K562 (cell line): ENCODE measurements at regions of chr6 and their contacts with region 1.

Region 1: DNA sequence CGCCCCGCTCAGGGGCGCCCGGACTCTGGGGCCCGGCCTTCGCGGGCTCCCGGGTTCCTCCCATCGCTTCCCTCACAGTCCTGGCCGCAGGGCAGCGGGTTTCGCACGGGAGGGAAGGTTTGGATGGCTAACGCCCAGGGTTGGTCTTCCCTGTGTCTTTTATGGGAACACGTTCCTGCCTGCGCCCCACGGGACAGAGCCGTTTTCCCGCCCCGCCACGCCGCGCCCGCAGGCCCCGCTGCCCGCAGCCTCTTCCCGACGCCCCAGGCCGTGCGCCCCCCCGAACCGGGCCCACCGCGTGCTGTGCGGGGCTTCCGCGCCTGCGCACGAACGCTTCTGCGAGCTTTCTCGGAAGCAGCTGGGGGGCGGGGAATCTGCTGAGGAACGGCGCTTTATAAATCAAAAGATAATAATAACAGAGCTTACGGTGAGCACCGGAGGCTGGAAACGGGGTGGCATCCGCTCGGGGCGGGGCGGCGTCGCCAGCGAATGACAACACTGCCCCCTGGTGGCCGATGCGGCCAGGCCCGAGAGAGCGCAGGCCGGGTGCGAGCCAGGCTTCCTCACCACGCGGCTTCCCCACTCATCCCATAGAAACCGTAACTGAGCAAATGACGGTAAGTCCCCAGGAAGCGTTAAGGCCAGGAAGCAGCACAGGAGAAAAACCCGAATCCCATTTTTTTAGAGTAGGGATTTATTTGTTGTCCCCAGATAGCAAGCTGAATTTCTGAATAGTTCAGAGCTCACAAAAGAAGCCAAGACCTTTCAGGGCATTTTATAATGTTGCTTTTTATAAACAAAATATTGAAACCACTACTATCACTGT is 116.4 kb downstream of the MYLK4 start:
- DNase-seq: peak; percentile 85 to 94 (median 90)
- ATAC-seq: peak; percentile 99
- H3K4me3 ChIP-seq: no peak overlapping the region
- H3K27ac ChIP-seq: no peak overlapping the region
- H3K4me1 ChIP-seq: peaks cover 0 to 8% of the 10 kb centered on the region in 2 experiments; a peak in 2 of 5 replicates
- H3K27me3 ChIP-seq: peaks cover 46 to 78% of the 10 kb centered on the region in 2 experiments; a peak in 4 of 5 replicates
- CTCF ChIP-seq: peak; percentile 96 to 97 (median 96)
- EP300 ChIP-seq: no peak
- POLR2A ChIP-seq: no peak
- RAD21 ChIP-seq: peak; percentile 97

Region 2: GRCh38 chr6:2209226-2209809 is 425.0 kb before region 1 on chr6:
- CTCF ChIA-PET with region 1: no interaction called
- POLR2A ChIA-PET with region 1: no interaction called
- in situ Hi-C with region 1: no loop called
- intact Hi-C with region 1: loop called (anchors 10 kb)
- DNase-seq: peak in 3 of 4 experiments; percentile 39 to 62 (median 49)
- ATAC-seq: peak; percentile 96
- H3K4me3 ChIP-seq: no peak overlapping the region
- H3K27ac ChIP-seq: no peak overlapping the region
- H3K4me1 ChIP-seq: no peaks in the 10 kb centered on the region
- H3K27me3 ChIP-seq: no peaks in the 10 kb centered on the region; a peak in 2 of 5 replicates
- CTCF ChIP-seq: peak; percentile 69 to 75 (median 75)
- EP300 ChIP-seq: no peak
- POLR2A ChIP-seq: no peak
- RAD21 ChIP-seq: peak; percentile 35 to 74; a peak in 3 of 4 replicates

Region 3: GRCh38 chr6:2264932-2265331 is 369.4 kb before region 1 on chr6:
- CTCF ChIA-PET with region 1: no interaction called
- POLR2A ChIA-PET with region 1: no interaction called
- in situ Hi-C with region 1: no loop called
- intact Hi-C with region 1: no loop called
- DNase-seq: no peak
- ATAC-seq: no peak
- H3K4me3 ChIP-seq: no peak overlapping the region
- H3K27ac ChIP-seq: no peak overlapping the region
- H3K4me1 ChIP-seq: no peaks in the 10 kb centered on the region
- H3K27me3 ChIP-seq: no peaks in the 10 kb centered on the region
- CTCF ChIP-seq: no peak
- EP300 ChIP-seq: no peak
- POLR2A ChIP-seq: no peak
- RAD21 ChIP-seq: no peak

Region 4: GRCh38 chr6:2448820-2449571 is 185.4 kb before region 1 on chr6:
- CTCF ChIA-PET with region 1: no interaction called
- POLR2A ChIA-PET with region 1: interaction called, 3 read pairs
- in situ Hi-C with region 1: no loop called
- intact Hi-C with region 1: loop called (anchors 1 kb)
- DNase-seq: peak; percentile 49 to 72 (median 60)
- ATAC-seq: peak; percentile 94
- H3K4me3 ChIP-seq: no peak overlapping the region
- H3K27ac ChIP-seq: no peak overlapping the region
- H3K4me1 ChIP-seq: no peaks in the 10 kb centered on the region
- H3K27me3 ChIP-seq: peaks cover 2 to 16% of the 10 kb centered on the region in 2 experiments; a peak in 3 of 5 replicates
- CTCF ChIP-seq: peak; percentile 61 to 81 (median 80)
- EP300 ChIP-seq: no peak
- POLR2A ChIP-seq: no peak
- RAD21 ChIP-seq: peak; percentile 60 to 69

Region 5: GRCh38 chr6:2505624-2506023 is 128.7 kb before region 1 on chr6:
- CTCF ChIA-PET with region 1: no interaction called
- POLR2A ChIA-PET with region 1: no interaction called
- in situ Hi-C with region 1: no loop called
- intact Hi-C with region 1: loop called (anchors 5 kb)
- DNase-seq: peak; percentile 29 to 39 (median 34)
- ATAC-seq: peak; percentile 70
- H3K4me3 ChIP-seq: no peak overlapping the region
- H3K27ac ChIP-seq: no peak overlapping the region
- H3K4me1 ChIP-seq: no peaks in the 10 kb centered on the region
- H3K27me3 ChIP-seq: peaks cover 18 to 27% of the 10 kb centered on the region in 2 experiments
- CTCF ChIP-seq: peak; percentile 55 to 73 (median 64)
- EP300 ChIP-seq: no peak
- POLR2A ChIP-seq: no peak
- RAD21 ChIP-seq: peak in 1 of 2 experiments; percentile 13; a peak in 1 of 4 replicates

Region 6: DNA sequence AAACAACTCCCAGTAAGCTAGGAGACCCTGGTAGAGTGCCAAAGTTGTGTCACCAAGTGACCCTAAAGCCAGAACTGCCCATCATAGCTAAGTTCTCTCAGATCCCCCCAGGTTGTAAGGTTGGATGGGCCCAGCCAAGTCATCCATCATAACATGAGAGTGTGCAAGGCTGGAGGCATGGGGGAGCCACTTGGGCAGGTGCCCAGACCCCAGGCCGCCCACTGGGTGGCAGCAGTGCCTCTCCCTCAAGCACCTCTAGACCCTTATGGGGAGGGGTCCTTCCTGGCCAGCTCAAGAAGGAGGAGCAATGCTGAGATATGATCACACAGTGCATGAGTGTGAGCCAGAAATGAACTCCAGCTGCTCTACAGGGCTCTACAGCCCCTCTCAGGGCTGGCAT is 38.1 kb before region 1 on chr6:
- CTCF ChIA-PET with region 1: no interaction called
- POLR2A ChIA-PET with region 1: no interaction called
- in situ Hi-C with region 1: no loop called
- intact Hi-C with region 1: no loop called
- DNase-seq: peak in 1 of 4 experiments; percentile 31
- ATAC-seq: peak; percentile 66
- H3K4me3 ChIP-seq: no peak overlapping the region
- H3K27ac ChIP-seq: no peak overlapping the region
- H3K4me1 ChIP-seq: no peaks in the 10 kb centered on the region
- H3K27me3 ChIP-seq: peaks cover 0 to 25% of the 10 kb centered on the region in 2 experiments; a peak in 3 of 5 replicates
- CTCF ChIP-seq: peak; percentile 29 to 38 (median 34); a peak in 2 of 6 replicates
- EP300 ChIP-seq: no peak
- POLR2A ChIP-seq: no peak
- RAD21 ChIP-seq: peak in 1 of 2 experiments; percentile 47; a peak in 2 of 4 replicates

Region 7: GRCh38 chr6:2695454-2696095 is 61.2 kb after region 1 on chr6:
- CTCF ChIA-PET with region 1: no interaction called
- POLR2A ChIA-PET with region 1: no interaction called
- in situ Hi-C with region 1: no loop called
- intact Hi-C with region 1: loop called (anchors 5 kb)
- DNase-seq: peak in 1 of 4 experiments; percentile 30
- ATAC-seq: peak; percentile 72; the same call in 2 of the 3 replicates
- H3K4me3 ChIP-seq: no peak overlapping the region
- H3K27ac ChIP-seq: no peak overlapping the region
- H3K4me1 ChIP-seq: no peaks in the 10 kb centered on the region
- H3K27me3 ChIP-seq: peaks cover 51 to 59% of the 10 kb centered on the region in 2 experiments
- CTCF ChIP-seq: peak; percentile 17 to 62 (median 48); a peak in 4 of 6 replicates
- EP300 ChIP-seq: no peak
- POLR2A ChIP-seq: no peak
- RAD21 ChIP-seq: peak; percentile 83 to 84

Region 8: DNA sequence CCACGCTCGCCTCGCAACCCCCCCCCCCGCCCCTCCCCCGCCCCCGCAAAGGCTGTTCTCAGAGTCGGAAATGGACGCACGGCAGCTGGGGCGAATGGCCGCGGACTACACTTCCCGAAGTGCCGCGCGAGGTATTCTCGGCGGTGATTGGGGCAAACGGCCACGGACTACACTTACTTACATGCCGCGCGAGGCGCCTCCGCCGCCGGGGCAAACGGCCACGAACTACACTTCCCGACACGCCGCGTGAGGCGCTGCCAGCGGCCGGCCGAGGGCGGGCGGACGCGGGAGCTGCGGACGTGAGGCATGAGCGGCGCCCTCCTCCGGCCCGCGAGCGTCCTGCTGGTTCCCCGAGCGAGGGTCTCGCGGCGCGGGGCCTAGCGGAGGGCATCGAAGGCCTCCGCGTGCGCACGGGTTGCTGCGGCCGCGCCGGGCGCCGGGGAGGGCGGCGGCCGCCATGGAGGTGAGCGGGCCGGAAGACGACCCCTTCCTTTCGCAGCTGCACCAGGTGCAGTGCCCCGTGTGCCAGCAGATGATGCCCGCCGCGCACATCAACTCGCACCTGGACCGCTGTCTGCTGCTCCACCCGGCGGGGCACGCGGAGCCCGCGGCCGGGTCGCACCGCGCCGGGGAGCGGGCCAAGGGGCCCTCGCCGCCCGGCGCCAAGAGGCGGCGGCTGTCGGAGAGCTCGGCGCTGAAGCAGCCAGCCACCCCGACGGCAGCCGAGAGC is 131.0 kb after region 1 on chr6 and contains the start of gene WRNIP1:
- CTCF ChIA-PET with region 1: no interaction called
- POLR2A ChIA-PET with region 1: no interaction called
- in situ Hi-C with region 1: no loop called
- intact Hi-C with region 1: no loop called
- DNase-seq: peak; percentile 83 to 100 (median 92)
- ATAC-seq: peak; percentile 93
- H3K4me3 ChIP-seq: peak within 1 kb of the TSS; percentile 78
- H3K27ac ChIP-seq: peak within 1 kb of the TSS; percentile 85
- H3K4me1 ChIP-seq: peaks cover 37 to 39% of the 10 kb centered on the region in 2 experiments
- H3K27me3 ChIP-seq: no peaks in the 10 kb centered on the region
- CTCF ChIP-seq: peak; percentile 74 to 95 (median 78)
- EP300 ChIP-seq: no peak
- POLR2A ChIP-seq: no peak
- RAD21 ChIP-seq: peak in 1 of 2 experiments; percentile 17; a peak in 2 of 4 replicates
- polyA plus RNA-seq, gene WRNIP1: 13.2 to 15.9 TPM

Region 9: GRCh38 chr6:2791124-2791974 is 157.0 kb after region 1 on chr6:
- CTCF ChIA-PET with region 1: no interaction called
- POLR2A ChIA-PET with region 1: no interaction called
- in situ Hi-C with region 1: no loop called
- intact Hi-C with region 1: no loop called
- DNase-seq: peak; percentile 74 to 88 (median 81)
- ATAC-seq: peak; percentile 97
- H3K4me3 ChIP-seq: no peak overlapping the region
- H3K27ac ChIP-seq: no peak overlapping the region
- H3K4me1 ChIP-seq: peaks cover 2 to 3% of the 10 kb centered on the region in 2 experiments; a peak in 3 of 5 replicates
- H3K27me3 ChIP-seq: no peaks in the 10 kb centered on the region
- CTCF ChIP-seq: peak; percentile 89 to 98 (median 97)
- EP300 ChIP-seq: no peak
- POLR2A ChIP-seq: no peak
- RAD21 ChIP-seq: peak; percentile 97 to 99